WTC11 (cell line): ENCODE measurements at regions of chr6 and their contacts with region 1.

Region 1: DNA sequence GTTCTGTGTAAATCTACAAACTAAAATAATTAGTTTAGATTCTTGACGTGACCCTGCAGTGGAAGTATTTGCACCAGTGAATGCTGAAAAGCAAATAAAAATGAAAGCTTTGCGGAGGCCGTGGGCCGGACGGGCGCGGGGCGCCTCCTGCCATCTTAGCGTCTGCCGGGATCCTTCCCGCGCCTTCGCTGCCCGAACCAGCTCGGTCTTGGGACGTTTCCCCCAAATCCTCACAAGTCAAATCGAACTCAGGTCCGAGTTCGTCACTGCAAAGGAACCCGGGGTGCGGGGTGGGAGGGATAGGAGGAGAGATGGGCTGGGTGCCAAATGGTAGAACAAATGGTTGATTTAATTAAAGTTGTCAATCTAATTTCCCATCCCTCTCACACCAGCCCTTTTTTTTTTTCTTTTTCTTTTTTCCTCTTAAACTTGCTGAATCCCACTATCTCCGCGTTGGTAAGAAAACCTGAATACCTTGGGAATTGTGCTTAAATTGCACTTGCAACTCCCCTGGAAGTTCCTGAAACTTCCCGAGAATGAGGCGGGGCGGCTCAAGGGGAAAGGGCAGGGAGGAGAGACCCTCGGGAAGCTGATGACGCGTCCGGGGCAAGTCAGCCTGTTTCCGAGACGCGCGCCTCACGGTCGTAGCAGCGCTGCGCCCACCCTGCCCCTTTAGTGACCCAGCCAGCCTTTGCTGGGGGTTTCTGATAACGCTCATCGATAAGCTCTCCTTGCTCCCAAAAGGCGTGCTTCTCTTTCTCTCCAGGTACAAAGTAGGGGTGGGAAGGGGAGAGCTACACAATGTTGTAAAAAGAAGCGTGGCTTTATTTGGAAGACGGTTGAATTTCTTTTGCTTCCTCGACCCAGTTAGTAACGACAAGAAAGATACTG is 1.8 kb downstream of the GJA1 start:
- DNase-seq: peak; percentile 54
- ATAC-seq: peak; percentile 29
- H3K4me3 Mint-ChIP-seq: peak overlapping the region; percentile 91
- H3K27ac Mint-ChIP-seq: peak overlapping the region; percentile 98
- H3K4me1 Mint-ChIP-seq: peaks cover 58% of the 10 kb centered on the region
- H3K27me3 Mint-ChIP-seq: no peaks in the 10 kb centered on the region; the same call in 1 of the 2 replicates
- CTCF ChIP-seq: no peak

Region 2: DNA sequence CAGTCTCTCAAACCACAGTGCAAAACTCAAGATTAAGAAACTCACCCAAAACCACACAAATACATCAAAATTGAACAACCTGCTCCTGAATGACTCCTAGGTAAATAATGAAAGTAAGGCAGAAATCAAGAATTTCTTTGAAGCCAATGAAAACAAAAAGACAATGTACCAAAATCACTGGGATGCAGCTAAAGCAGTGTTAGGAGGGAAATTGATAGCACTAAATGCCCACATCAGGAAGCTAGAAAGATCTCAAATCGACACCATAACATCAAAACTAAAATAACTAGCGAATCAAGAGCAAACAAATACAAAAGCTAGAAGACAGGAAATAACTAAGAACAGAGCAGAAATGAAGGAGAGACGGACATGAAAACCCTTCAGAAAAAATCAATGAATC is 173.5 kb before region 1 on chr6:
- CTCF ChIA-PET with region 1: no interaction called
- POLR2A ChIA-PET with region 1: no interaction called
- DNase-seq: no peak
- ATAC-seq: no peak
- H3K4me3 Mint-ChIP-seq: no peak overlapping the region
- H3K27ac Mint-ChIP-seq: no peak overlapping the region
- H3K4me1 Mint-ChIP-seq: no peaks in the 10 kb centered on the region
- H3K27me3 Mint-ChIP-seq: no peaks in the 10 kb centered on the region
- CTCF ChIP-seq: no peak

Region 3: DNA sequence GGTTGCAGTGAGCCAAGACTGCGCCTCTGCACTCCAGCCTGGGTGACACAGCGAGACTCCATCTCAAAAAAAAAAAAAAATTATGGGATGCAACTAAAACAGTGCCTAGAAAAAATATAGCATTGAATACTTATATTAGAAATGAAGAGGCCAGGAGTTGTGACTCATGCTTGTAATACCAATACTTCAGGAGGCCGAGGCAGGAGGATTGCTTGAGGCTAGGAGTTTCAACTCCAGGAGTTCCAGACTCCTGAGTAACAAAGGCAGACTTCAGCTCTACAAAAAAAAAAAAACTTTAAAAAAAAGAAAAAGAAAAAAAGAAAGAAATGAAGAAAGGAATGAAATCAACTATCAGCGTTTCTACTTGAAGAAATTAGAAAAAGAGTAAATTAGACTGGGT is 18.9 kb before region 1 on chr6:
- CTCF ChIA-PET with region 1: no interaction called
- POLR2A ChIA-PET with region 1: no interaction called
- DNase-seq: no peak
- ATAC-seq: no peak
- H3K4me3 Mint-ChIP-seq: no peak overlapping the region
- H3K27ac Mint-ChIP-seq: no peak overlapping the region
- H3K4me1 Mint-ChIP-seq: 0 out of 2 replicates have a peak, but pooled peaks cover 4% of the 10 kb centered on the region
- H3K27me3 Mint-ChIP-seq: no peaks in the 10 kb centered on the region
- CTCF ChIP-seq: no peak

Region 4: DNA sequence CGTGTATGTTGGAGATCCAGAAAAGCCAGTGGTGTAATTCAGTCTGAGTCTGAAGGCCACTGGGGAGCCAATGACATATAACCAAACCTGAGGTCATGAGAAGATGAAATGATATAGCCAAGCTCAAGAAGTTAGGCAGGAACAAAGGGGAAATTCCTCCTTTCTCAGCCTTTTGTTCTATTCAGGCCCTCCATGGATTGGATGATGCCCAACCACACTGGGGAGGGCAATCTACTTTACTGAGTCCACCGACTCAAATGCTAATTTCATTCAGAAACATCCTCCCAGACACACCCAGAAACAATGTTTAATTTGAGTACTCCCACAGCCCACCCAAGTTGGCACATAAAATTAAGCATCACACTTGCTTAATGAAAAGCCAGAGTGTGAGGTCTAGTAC is 181.8 kb after region 1 on chr6:
- CTCF ChIA-PET with region 1: interaction called, 5 read pairs
- POLR2A ChIA-PET with region 1: interaction called, 10 read pairs
- DNase-seq: peak; percentile 21
- ATAC-seq: peak; percentile 85
- H3K4me3 Mint-ChIP-seq: peak overlapping the region; percentile 59
- H3K27ac Mint-ChIP-seq: peak overlapping the region; percentile 99
- H3K4me1 Mint-ChIP-seq: peaks cover 71% of the 10 kb centered on the region
- H3K27me3 Mint-ChIP-seq: no peaks in the 10 kb centered on the region; the same call in none of the 2 replicates
- CTCF ChIP-seq: no peak